Posterior vena cava (tissue), 2 donors: ENCODE measurements at regions of chr11 and their contacts with region 1.

Region 1: DNA sequence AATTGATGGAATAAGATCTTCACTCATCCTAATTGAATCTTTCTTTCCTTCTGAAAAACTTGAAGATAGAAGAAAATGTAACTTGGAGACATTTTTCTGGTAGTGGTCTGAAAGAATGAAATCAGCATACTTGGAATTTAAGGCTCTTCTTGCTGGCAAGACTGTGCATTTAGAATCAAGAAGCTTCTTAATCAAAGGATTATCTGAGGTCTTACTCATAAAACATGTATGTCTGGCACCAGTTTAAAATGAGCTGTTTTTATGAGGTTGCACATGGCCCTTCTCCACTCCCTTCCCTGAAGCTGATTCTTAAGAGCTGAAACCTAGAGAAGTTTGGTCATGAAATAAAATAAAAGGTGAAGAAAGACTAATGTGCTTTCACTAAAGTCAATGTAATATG is 77.3 kb downstream of the ARHGEF12 start:
- DNase-seq: no peak

Region 2: GRCh38 chr11:120344302-120345004 is 69.0 kb before region 1 on chr11:
- intact Hi-C with region 1: loop called in 1 of 2 experiments (anchors 5 kb)
- DNase-seq: no peak

Region 3: DNA sequence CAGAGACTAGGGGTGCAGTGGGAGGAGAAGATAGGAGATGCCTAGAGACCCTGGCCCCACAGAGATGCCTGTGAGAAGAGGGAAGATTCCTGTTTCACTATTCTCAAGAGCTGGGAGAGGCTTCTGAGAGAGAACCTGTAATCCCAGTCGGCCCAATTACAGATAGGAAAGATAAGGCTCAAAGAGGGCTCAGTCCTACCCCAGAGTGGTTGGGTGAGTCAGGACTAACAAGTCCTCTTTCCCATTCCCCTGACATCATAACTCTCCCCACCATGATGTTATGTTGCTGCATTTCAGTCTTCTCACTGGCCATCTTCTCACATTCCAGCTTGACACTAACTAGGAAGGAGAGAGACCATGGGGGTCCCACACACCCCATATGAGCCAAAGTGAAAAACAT is 59.4 kb before region 1 on chr11:
- intact Hi-C with region 1: loop called in 1 of 2 experiments (anchors 10 kb)
- DNase-seq: no peak